ENCODE measurements at regions of chr14 and their contacts with region 1.

Region 1: DNA sequence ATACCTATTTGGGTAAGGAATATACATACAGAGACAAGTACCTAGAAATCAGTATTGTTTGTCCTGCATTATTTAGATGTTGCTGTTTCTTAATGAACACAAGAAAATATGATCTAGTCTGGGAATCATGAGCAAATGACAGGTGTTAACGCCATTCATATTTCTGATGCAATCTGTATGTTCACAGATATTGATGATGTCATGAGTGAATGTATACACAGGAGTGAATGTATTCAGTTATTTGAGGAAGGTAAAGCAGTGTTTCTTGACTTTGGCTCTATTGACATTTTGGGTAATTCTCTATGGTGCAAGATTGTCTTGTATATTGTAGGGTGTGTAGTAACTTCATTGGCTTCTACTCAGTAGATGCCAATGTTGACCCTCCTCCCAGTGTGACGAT is 26.7 kb upstream of the RTL1 start:
- DNase-seq: no peak
- ATAC-seq: no peak
- H3K4me3 ChIP-seq: no peak overlapping the region
- H3K4me3 Mint-ChIP-seq: no peak overlapping the region
- H3K27ac ChIP-seq: no peak overlapping the region
- H3K27ac Mint-ChIP-seq: no peak overlapping the region
- H3K4me1 ChIP-seq: no peaks in the 10 kb centered on the region
- H3K4me1 Mint-ChIP-seq: no peaks in the 10 kb centered on the region
- H3K27me3 ChIP-seq: no peaks in the 10 kb centered on the region
- H3K27me3 Mint-ChIP-seq: peaks cover 16% of the 10 kb centered on the region
- CTCF ChIP-seq: no peak

Region 2: DNA sequence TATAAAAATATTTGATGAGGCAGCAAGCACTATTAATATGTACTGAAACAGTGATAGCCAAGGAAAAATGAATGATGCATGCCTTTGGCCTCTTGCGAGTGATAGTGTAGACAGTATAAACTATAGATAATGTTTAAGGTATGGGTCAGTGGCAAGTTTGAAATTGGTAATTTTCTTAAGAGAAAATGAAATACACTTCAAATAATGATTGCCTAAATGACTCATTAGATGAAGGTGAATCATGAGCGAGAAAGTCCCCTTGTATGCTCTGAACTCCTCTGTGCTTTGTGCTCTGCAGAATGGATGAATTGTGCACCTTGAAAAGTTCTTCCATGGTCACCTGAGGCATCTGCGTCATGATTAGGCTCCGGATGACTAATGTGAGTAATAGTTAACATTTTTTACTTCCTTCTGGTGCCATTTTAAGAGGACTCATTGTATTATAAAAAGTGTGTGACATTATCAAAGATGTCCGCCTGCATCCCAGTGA is 58.2 kb after region 1 on chr14:
- CTCF ChIA-PET with region 1: no interaction called
- POLR2A ChIA-PET with region 1: no interaction called
- intact Hi-C with region 1: loop called in 1 of 2 experiments (anchors 1 kb)
- DNase-seq: no peak
- ATAC-seq: no peak
- H3K4me3 ChIP-seq: no peak overlapping the region
- H3K4me3 Mint-ChIP-seq: no peak overlapping the region
- H3K27ac ChIP-seq: no peak overlapping the region
- H3K27ac Mint-ChIP-seq: no peak overlapping the region
- H3K4me1 ChIP-seq: no peaks in the 10 kb centered on the region
- H3K4me1 Mint-ChIP-seq: no peaks in the 10 kb centered on the region
- H3K27me3 ChIP-seq: no peaks in the 10 kb centered on the region
- H3K27me3 Mint-ChIP-seq: no peaks in the 10 kb centered on the region
- CTCF ChIP-seq: no peak

Measured in CD8-positive, alpha-beta T cell (primary cell).